ENCODE measurements at regions of chr6 and their contacts with region 1.

Region 1: GRCh38 chr6:26156076-26156849 is 69.0 kb downstream of the HFE start:
- DNase-seq: peak; percentile 80 to 92 (median 88)
- ATAC-seq: peak; percentile 61
- H3K4me3 ChIP-seq: peak overlapping the region; percentile 82
- H3K4me3 Mint-ChIP-seq: peak overlapping the region; percentile 96 to 100 (median 98)
- H3K27ac ChIP-seq: peak overlapping the region; percentile 92
- H3K27ac Mint-ChIP-seq: peak overlapping the region; percentile 95 to 99 (median 98)
- H3K4me1 ChIP-seq: peaks cover 19 to 23% of the 10 kb centered on the region in 2 donors
- H3K4me1 Mint-ChIP-seq: peaks cover 16 to 58% (median 30%) of the 10 kb centered on the region in 7 donors
- H3K27me3 ChIP-seq: no peaks in the 10 kb centered on the region
- H3K27me3 Mint-ChIP-seq: peaks cover 0 to 33% (median 0%) of the 10 kb centered on the region in 5 donors

Region 2: GRCh38 chr6:26054857-26055669 is 101.2 kb before region 1 on chr6:
- CTCF ChIA-PET with region 1: interaction called, 3 read pairs
- POLR2A ChIA-PET with region 1: interaction called, 111 read pairs
- intact Hi-C with region 1: loop called (anchors 1 kb)
- DNase-seq: peak; percentile 54 to 94 (median 90)
- ATAC-seq: peak; percentile 81
- H3K4me3 ChIP-seq: peak overlapping the region; percentile 93
- H3K4me3 Mint-ChIP-seq: peak overlapping the region; percentile 88 to 99 (median 95)
- H3K27ac ChIP-seq: peak overlapping the region; percentile 83
- H3K27ac Mint-ChIP-seq: peak overlapping the region; percentile 95 to 99 (median 98)
- H3K4me1 ChIP-seq: peaks cover 0 to 14% of the 10 kb centered on the region in 2 donors
- H3K4me1 Mint-ChIP-seq: peaks cover 9 to 52% (median 10%) of the 10 kb centered on the region in 7 donors
- H3K27me3 ChIP-seq: no peaks in the 10 kb centered on the region
- H3K27me3 Mint-ChIP-seq: peaks cover 0 to 10% (median 0%) of the 10 kb centered on the region in 5 donors

Region 3: DNA sequence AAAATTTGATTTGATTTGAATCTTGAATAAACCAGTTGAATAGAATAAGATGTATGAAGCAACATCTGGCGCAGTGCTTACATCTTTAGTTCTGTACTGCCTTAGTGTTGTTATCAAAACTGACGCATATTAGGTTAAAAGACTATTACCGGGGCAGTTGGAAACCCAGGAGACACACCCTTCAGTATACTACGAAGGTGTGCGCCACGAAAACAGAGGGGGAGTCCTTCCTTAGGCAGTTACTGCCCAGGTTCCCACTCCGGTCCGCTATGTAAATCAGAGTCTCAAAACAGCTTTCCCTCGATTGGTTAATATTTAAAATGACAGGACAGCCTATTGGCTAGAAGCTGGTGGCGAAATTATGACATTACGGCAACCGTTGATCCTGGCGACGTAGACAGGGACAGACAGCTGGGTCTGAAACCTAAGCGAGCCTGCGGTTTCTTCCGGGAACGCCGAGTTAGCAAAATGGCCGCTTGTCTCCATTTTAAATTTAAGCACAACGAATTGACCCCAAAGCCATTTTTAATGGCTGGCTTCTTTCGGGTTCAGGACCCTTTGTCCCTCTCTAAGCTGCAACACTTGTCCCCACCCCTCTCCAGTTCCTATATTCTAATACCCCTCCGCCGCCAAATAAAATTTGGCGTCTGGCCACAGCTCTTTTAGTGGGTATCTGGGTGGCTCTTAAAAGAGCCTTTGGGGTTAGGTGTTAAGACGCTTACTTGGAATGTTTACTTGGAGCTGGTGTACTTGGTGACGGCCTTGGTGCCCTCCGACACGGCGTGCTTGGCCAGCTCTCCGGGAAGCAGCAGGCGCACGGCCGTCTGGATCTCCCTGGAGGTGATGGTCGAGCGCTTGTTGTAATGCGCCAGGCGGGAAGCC is 33.2 kb before region 1 on chr6:
- CTCF ChIA-PET with region 1: interaction called, 70 read pairs
- POLR2A ChIA-PET with region 1: interaction called, 2,532 read pairs
- intact Hi-C with region 1: loop called (anchors 1 kb)
- DNase-seq: peak; percentile 68 to 99 (median 96)
- ATAC-seq: peak; percentile 78
- H3K4me3 ChIP-seq: peak overlapping the region; percentile 94
- H3K4me3 Mint-ChIP-seq: peak overlapping the region; percentile 92 to 100 (median 98)
- H3K27ac ChIP-seq: peak overlapping the region; percentile 86
- H3K27ac Mint-ChIP-seq: peak overlapping the region; percentile 97 to 100 (median 99)
- H3K4me1 ChIP-seq: peaks cover 18 to 23% of the 10 kb centered on the region in 2 donors
- H3K4me1 Mint-ChIP-seq: peaks cover 22 to 54% (median 30%) of the 10 kb centered on the region in 7 donors
- H3K27me3 ChIP-seq: no peaks in the 10 kb centered on the region
- H3K27me3 Mint-ChIP-seq: peaks cover 0 to 21% (median 0%) of the 10 kb centered on the region in 5 donors

Region 4: GRCh38 chr6:26196846-26197648 is 40.8 kb after region 1 on chr6:
- CTCF ChIA-PET with region 1: interaction called, 32 read pairs
- POLR2A ChIA-PET with region 1: interaction called, 2,611 read pairs
- intact Hi-C with region 1: loop called (anchors 1 kb)
- DNase-seq: peak; percentile 55 to 95 (median 93)
- ATAC-seq: peak; percentile 73
- H3K4me3 ChIP-seq: peak overlapping the region; percentile 92
- H3K4me3 Mint-ChIP-seq: peak overlapping the region; percentile 85 to 99 (median 96)
- H3K27ac ChIP-seq: peak overlapping the region; percentile 91
- H3K27ac Mint-ChIP-seq: peak overlapping the region; percentile 96 to 100 (median 98)
- H3K4me1 ChIP-seq: peaks cover 10 to 12% of the 10 kb centered on the region in 2 donors
- H3K4me1 Mint-ChIP-seq: peaks cover 23 to 65% (median 42%) of the 10 kb centered on the region in 7 donors
- H3K27me3 ChIP-seq: no peaks in the 10 kb centered on the region
- H3K27me3 Mint-ChIP-seq: peaks cover 0 to 12% (median 0%) of the 10 kb centered on the region in 5 donors

Region 5: DNA sequence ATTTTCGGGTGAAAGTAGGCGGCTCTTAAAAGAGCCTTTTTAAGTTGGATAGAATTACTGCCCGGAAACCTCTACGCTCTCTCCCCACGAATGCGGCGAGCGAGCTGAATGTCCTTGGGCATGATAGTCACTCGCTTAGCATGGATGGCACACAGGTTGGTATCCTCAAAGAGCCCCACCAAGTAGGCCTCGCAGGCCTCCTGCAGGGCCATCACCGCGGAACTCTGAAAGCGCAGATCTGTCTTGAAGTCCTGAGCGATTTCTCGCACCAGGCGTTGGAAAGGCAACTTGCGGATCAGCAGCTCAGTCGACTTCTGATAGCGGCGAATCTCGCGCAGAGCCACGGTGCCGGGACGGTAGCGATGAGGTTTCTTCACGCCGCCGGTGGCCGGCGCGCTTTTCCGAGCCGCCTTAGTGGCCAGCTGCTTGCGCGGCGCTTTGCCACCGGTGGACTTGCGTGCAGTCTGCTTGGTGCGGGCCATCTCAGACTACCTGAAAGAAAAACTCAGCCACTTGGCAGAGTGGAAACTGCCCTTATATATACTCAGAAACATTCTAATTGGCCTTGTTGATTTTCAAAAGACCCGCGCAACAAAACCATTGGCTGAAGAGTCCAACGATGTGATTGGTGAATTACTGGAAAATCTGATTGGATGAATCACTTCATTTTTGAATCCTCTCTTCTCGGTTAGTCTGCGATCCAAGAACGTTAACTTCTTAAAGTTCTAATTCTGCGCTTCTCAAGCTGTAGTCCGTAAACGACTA is 114.8 kb after region 1 on chr6:
- CTCF ChIA-PET with region 1: interaction called, 3 read pairs
- POLR2A ChIA-PET with region 1: interaction called, 172 read pairs
- intact Hi-C with region 1: loop called (anchors 1 to 5 kb)
- DNase-seq: peak; percentile 50 to 89 (median 85)
- ATAC-seq: peak; percentile 24
- H3K4me3 ChIP-seq: peak overlapping the region; percentile 83
- H3K4me3 Mint-ChIP-seq: no peak overlapping the region
- H3K27ac ChIP-seq: peak overlapping the region; percentile 82
- H3K27ac Mint-ChIP-seq: peak overlapping the region in 2 of 9 donors; percentile 10 to 91
- H3K4me1 ChIP-seq: peaks cover 6 to 27% of the 10 kb centered on the region in 2 donors
- H3K4me1 Mint-ChIP-seq: peaks cover 0 to 34% (median 15%) of the 10 kb centered on the region in 7 donors
- H3K27me3 ChIP-seq: no peaks in the 10 kb centered on the region
- H3K27me3 Mint-ChIP-seq: no peaks in the 10 kb centered on the region

Region 6: GRCh38 chr6:27809939-27810767 is 1653.9 kb after region 1 on chr6:
- CTCF ChIA-PET with region 1: no interaction called
- POLR2A ChIA-PET with region 1: interaction called, 76 read pairs
- intact Hi-C with region 1: loop called in 1 of 2 experiments (anchors 5 kb)
- DNase-seq: peak; percentile 66 to 96 (median 92)
- ATAC-seq: peak; percentile 71
- H3K4me3 ChIP-seq: peak overlapping the region; percentile 76
- H3K4me3 Mint-ChIP-seq: peak overlapping the region; percentile 81 to 97 (median 94)
- H3K27ac ChIP-seq: peak overlapping the region; percentile 86
- H3K27ac Mint-ChIP-seq: peak overlapping the region; percentile 95 to 99 (median 98)
- H3K4me1 ChIP-seq: peaks cover 20 to 42% of the 10 kb centered on the region in 2 donors
- H3K4me1 Mint-ChIP-seq: peaks cover 18 to 82% (median 61%) of the 10 kb centered on the region in 7 donors
- H3K27me3 ChIP-seq: no peaks in the 10 kb centered on the region
- H3K27me3 Mint-ChIP-seq: peaks cover 0 to 9% (median 0%) of the 10 kb centered on the region in 5 donors

Region 7: GRCh38 chr6:28136585-28137504 is 1980.6 kb after region 1 on chr6:
- CTCF ChIA-PET with region 1: no interaction called
- POLR2A ChIA-PET with region 1: no interaction called
- intact Hi-C with region 1: loop called in 1 of 2 experiments (anchors 10 kb)
- DNase-seq: peak; percentile 45 to 72 (median 56)
- ATAC-seq: peak; percentile 56
- H3K4me3 ChIP-seq: peak overlapping the region; percentile 89
- H3K4me3 Mint-ChIP-seq: peak overlapping the region; percentile 91 to 100 (median 94)
- H3K27ac ChIP-seq: peak overlapping the region; percentile 98
- H3K27ac Mint-ChIP-seq: peak overlapping the region; percentile 91 to 100 (median 97)
- H3K4me1 ChIP-seq: peaks cover 10 to 19% of the 10 kb centered on the region in 2 donors
- H3K4me1 Mint-ChIP-seq: peaks cover 31 to 78% (median 72%) of the 10 kb centered on the region in 7 donors
- H3K27me3 ChIP-seq: no peaks in the 10 kb centered on the region
- H3K27me3 Mint-ChIP-seq: no peaks in the 10 kb centered on the region